ENCODE measurements at regions of chr1 and their contacts with region 1.

Region 1: GRCh38 chr1:110455151-110455550 is 4.2 kb downstream of the PROK1 start:
- DNase-seq: peak in 1 of 2 donors; percentile 21
- ATAC-seq: no peak
- H3K4me3 ChIP-seq: no peak overlapping the region
- H3K27ac ChIP-seq: no peak overlapping the region
- H3K4me1 ChIP-seq: no peaks in the 10 kb centered on the region
- H3K27me3 ChIP-seq: no peaks in the 10 kb centered on the region

Region 2: GRCh38 chr1:110312188-110313121 is 142.7 kb before region 1 on chr1:
- intact Hi-C with region 1: loop called (anchors 5 to 10 kb)
- DNase-seq: peak; percentile 88 to 91
- ATAC-seq: peak; percentile 94
- H3K4me3 ChIP-seq: no peak overlapping the region
- H3K27ac ChIP-seq: no peak overlapping the region
- H3K4me1 ChIP-seq: no peaks in the 10 kb centered on the region
- H3K27me3 ChIP-seq: no peaks in the 10 kb centered on the region

Region 3: GRCh38 chr1:110360431-110360830 is 94.7 kb before region 1 on chr1:
- intact Hi-C with region 1: no loop called
- DNase-seq: no peak
- ATAC-seq: no peak
- H3K4me3 ChIP-seq: no peak overlapping the region
- H3K27ac ChIP-seq: no peak overlapping the region
- H3K4me1 ChIP-seq: peaks cover 0 to 2% of the 10 kb centered on the region in 2 donors
- H3K27me3 ChIP-seq: no peaks in the 10 kb centered on the region

Region 4: GRCh38 chr1:110384581-110385321 is 70.4 kb before region 1 on chr1:
- intact Hi-C with region 1: no loop called
- DNase-seq: no peak
- ATAC-seq: no peak
- H3K4me3 ChIP-seq: no peak overlapping the region
- H3K27ac ChIP-seq: no peak overlapping the region
- H3K4me1 ChIP-seq: peaks cover 3% of the 10 kb centered on the region in 2 donors
- H3K27me3 ChIP-seq: no peaks in the 10 kb centered on the region

Region 5: GRCh38 chr1:110605901-110606656 is 150.9 kb after region 1 on chr1 and contains the start of gene KCNA2:
- intact Hi-C with region 1: no loop called
- DNase-seq: peak in 1 of 2 donors; percentile 85
- ATAC-seq: peak; percentile 80
- H3K4me3 ChIP-seq: peak within 1 kb of the TSS; percentile 12 to 53
- H3K27ac ChIP-seq: peak within 1 kb of the TSS in 1 of 2 donors; percentile 46
- H3K4me1 ChIP-seq: no peaks in the 10 kb centered on the region
- H3K27me3 ChIP-seq: no peaks in the 10 kb centered on the region
- total RNA-seq, gene KCNA2: 1.0 to 1.8 TPM

Measured in aorta (tissue), 5 donors.